ENCODE measurements at regions of chr18 and their contacts with region 1.

Region 1: DNA sequence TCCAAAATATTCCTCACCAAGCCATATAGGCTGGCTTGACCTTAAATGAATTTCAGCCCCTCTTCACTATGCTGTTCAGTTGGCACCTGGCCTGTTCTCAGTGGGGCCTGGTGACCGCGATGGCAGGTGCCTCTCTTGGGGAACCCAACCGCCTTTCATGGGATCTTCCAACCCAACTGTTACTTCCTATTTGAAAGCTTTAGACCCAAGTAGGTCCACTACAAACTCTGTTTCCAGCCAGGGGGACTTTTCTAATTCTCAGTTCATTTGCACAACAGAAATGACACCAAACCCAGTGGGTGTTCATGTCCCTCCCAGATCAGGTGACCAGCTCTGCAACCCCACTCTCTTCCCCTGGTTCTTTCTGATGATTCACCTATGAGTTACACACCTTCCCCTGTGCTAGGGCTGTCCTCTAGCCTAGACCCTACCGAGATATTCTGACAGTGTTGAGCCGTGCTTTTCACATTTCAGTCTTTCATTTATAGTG is 35.6 kb upstream of the NDUFV2 start:
- DNase-seq: peak in 1 of 3 donors; percentile 64
- H3K4me3 ChIP-seq: no peak overlapping the region
- H3K4me3 Mint-ChIP-seq: no peak overlapping the region
- H3K27ac ChIP-seq: no peak overlapping the region
- H3K27ac Mint-ChIP-seq: peak overlapping the region in 1 of 7 donors; percentile 4
- H3K4me1 ChIP-seq: peaks cover 26 to 38% of the 10 kb centered on the region in 2 donors
- H3K4me1 Mint-ChIP-seq: peaks cover 47% of the 10 kb centered on the region
- H3K27me3 ChIP-seq: no peaks in the 10 kb centered on the region
- H3K27me3 Mint-ChIP-seq: peaks cover 0 to 1% (median 0%) of the 10 kb centered on the region in 3 donors
- CTCF ChIP-seq: no peak

Region 2: DNA sequence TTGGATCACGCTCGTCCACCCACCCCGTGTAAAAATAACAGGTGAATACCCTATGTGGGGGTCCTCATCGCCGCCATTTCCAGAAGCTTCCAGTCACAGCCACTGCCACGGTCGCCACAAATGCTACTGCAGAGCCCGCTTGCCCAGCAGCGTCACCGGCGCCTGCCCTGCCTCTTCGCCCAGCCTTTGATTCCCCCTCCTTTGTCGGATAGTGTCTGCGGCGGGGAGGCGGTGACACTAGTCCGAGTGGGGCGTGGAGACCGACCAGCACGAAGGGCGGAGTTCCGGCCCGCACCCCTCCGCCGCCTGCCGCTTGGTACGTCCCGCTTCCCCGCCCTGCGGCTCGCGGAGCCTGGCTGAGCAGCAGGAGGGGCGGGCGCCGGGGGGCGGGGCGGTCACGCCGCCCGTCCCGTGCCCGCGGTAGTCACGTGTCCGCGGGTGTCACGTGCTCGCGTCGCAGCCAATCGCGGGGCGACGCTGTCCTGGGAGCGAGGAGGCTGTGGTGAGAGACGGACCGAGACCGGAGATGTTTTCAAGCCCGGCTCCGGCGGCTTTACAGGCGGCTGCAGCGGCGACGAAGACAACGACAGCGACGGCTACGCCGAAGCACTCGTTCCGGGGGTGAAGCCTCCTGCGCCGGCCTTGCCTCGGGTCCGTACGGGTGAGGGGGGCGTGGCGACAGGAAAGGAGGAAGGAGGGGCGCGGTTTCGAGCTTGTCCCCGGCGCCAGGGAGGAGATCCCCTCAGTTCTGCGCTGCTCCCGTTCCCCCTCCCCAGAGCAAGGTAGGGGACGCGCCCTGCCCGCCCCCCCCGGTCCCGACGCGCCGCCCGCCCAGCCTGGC is 69.7 kb after region 1 on chr18 and contains the start of gene ANKRD12:
- intact Hi-C with region 1: loop called in 1 of 2 experiments (anchors 5 kb)
- DNase-seq: peak; percentile 98 to 99 (median 98)
- H3K4me3 ChIP-seq: peak within 1 kb of the TSS; percentile 84 to 100 (median 88)
- H3K4me3 Mint-ChIP-seq: peak within 1 kb of the TSS; percentile 91 to 95
- H3K27ac ChIP-seq: peak within 1 kb of the TSS; percentile 97 to 100
- H3K27ac Mint-ChIP-seq: peak within 1 kb of the TSS; percentile 98 to 100 (median 99)
- H3K4me1 ChIP-seq: peaks cover 31 to 50% of the 10 kb centered on the region in 2 donors
- H3K4me1 Mint-ChIP-seq: peaks cover 47% of the 10 kb centered on the region
- H3K27me3 ChIP-seq: no peaks in the 10 kb centered on the region
- H3K27me3 Mint-ChIP-seq: no peaks in the 10 kb centered on the region
- CTCF ChIP-seq: no peak
- polyA plus RNA-seq, gene ANKRD12: 9.3 to 15.5 (median 15.4) TPM

Region 3: GRCh38 chr18:9153256-9153655 is 86.4 kb after region 1 on chr18:
- intact Hi-C with region 1: loop called in 1 of 2 experiments (anchors 5 kb)
- DNase-seq: no peak
- H3K4me3 ChIP-seq: no peak overlapping the region
- H3K4me3 Mint-ChIP-seq: peak overlapping the region in 1 of 2 donors; percentile 5
- H3K27ac ChIP-seq: peak overlapping the region in 1 of 2 donors; percentile 71
- H3K27ac Mint-ChIP-seq: peak overlapping the region; percentile 5 to 85 (median 72)
- H3K4me1 ChIP-seq: peaks cover 39 to 62% of the 10 kb centered on the region in 2 donors
- H3K4me1 Mint-ChIP-seq: peaks cover 70% of the 10 kb centered on the region
- H3K27me3 ChIP-seq: no peaks in the 10 kb centered on the region
- H3K27me3 Mint-ChIP-seq: no peaks in the 10 kb centered on the region
- CTCF ChIP-seq: no peak

Region 4: GRCh38 chr18:9184998-9185613 is 118.2 kb after region 1 on chr18:
- intact Hi-C with region 1: no loop called
- DNase-seq: no peak
- H3K4me3 ChIP-seq: peak overlapping the region; percentile 20 to 69 (median 55)
- H3K4me3 Mint-ChIP-seq: peak overlapping the region; percentile 47 to 81
- H3K27ac ChIP-seq: peak overlapping the region in 1 of 2 donors; percentile 74
- H3K27ac Mint-ChIP-seq: peak overlapping the region; percentile 29 to 81 (median 64)
- H3K4me1 ChIP-seq: peaks cover 8 to 22% of the 10 kb centered on the region in 2 donors
- H3K4me1 Mint-ChIP-seq: peaks cover 41% of the 10 kb centered on the region
- H3K27me3 ChIP-seq: no peaks in the 10 kb centered on the region
- H3K27me3 Mint-ChIP-seq: no peaks in the 10 kb centered on the region
- CTCF ChIP-seq: no peak

Region 5: DNA sequence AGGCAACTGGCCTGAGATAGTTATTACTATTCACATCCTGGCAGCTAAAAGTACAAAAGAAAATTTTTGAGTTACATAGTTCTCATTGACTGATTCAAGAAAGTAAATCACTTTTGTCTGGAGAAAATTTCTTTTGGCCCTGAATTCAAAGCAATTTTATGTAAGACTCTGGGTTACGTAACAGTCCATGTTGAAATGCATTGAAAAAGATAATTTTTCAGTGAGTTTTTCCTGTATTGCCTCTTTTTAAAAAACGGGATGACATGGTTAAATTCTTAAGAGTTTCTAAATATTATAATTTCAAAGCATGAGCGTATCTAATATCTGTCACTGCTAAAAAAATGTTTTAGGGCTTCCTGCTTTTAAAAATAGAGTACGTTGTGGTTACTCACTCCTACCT is 142.4 kb after region 1 on chr18:
- intact Hi-C with region 1: loop called in 1 of 2 experiments (anchors 10 kb)
- DNase-seq: peak; percentile 15 to 47 (median 29)
- H3K4me3 ChIP-seq: peak overlapping the region in 1 of 3 experiments; percentile 33
- H3K4me3 Mint-ChIP-seq: no peak overlapping the region
- H3K27ac ChIP-seq: peak overlapping the region in 1 of 2 donors; percentile 69
- H3K27ac Mint-ChIP-seq: peak overlapping the region; percentile 4 to 83 (median 62)
- H3K4me1 ChIP-seq: peaks cover 17 to 28% of the 10 kb centered on the region in 2 donors
- H3K4me1 Mint-ChIP-seq: peaks cover 26% of the 10 kb centered on the region
- H3K27me3 ChIP-seq: no peaks in the 10 kb centered on the region
- H3K27me3 Mint-ChIP-seq: no peaks in the 10 kb centered on the region
- CTCF ChIP-seq: no peak

Region 6: DNA sequence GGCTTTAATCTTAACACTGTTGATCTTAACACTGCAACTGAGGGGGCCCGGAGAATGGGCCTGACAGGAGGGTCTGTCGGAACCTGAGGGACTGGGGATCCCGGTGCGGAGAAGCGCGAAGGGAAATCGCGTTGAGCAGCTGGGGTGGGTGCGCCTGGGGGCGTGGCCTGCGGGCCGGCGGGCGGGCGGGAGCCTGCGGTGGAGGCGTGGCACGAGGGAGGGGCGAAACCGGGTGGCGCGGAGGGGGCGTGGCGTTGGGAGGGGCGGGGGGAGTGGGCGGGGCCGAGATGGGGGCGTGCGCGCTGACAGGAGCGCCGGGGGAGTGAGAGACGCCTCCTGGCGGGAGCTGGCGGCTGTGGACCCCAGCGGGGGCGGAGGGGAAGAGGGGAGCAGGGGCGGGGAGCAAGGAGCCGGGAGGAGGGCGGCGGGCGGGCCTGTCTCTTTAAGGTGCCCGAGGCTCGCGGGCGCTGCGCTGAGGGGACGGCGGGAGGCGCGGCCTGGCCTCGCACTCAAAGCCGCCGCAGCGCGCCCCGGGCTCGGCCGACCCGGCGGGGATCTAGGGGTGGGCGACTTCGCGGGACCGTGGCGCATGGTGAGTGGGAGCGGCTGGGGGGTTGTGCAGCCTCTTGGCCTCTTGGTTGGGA is 267.6 kb after region 1 on chr18 and contains the start of gene TWSG1:
- intact Hi-C with region 1: loop called (anchors 5 to 10 kb)
- DNase-seq: peak; percentile 78 to 84 (median 80)
- H3K4me3 ChIP-seq: peak within 1 kb of the TSS; percentile 80 to 87 (median 85)
- H3K4me3 Mint-ChIP-seq: peak within 1 kb of the TSS; percentile 92 to 93
- H3K27ac ChIP-seq: peak within 1 kb of the TSS; percentile 48 to 59
- H3K27ac Mint-ChIP-seq: peak within 1 kb of the TSS; percentile 63 to 88 (median 81)
- H3K4me1 ChIP-seq: peaks cover 14 to 31% of the 10 kb centered on the region in 2 donors
- H3K4me1 Mint-ChIP-seq: peaks cover 27% of the 10 kb centered on the region
- H3K27me3 ChIP-seq: peaks cover 0 to 14% of the 10 kb centered on the region in 2 donors
- H3K27me3 Mint-ChIP-seq: peaks cover 5 to 8% (median 8%) of the 10 kb centered on the region in 3 donors
- CTCF ChIP-seq: peak; percentile 50
- polyA plus RNA-seq, gene TWSG1: 1.6 to 5.5 (median 3.9) TPM

Region 7: GRCh38 chr18:9516437-9517064 is 449.7 kb after region 1 on chr18:
- intact Hi-C with region 1: loop called (anchors 5 to 10 kb)
- DNase-seq: peak; percentile 21 to 56 (median 51)
- H3K4me3 ChIP-seq: no peak overlapping the region
- H3K4me3 Mint-ChIP-seq: no peak overlapping the region
- H3K27ac ChIP-seq: no peak overlapping the region
- H3K27ac Mint-ChIP-seq: no peak overlapping the region
- H3K4me1 ChIP-seq: no peaks in the 10 kb centered on the region
- H3K4me1 Mint-ChIP-seq: no peaks in the 10 kb centered on the region
- H3K27me3 ChIP-seq: no peaks in the 10 kb centered on the region
- H3K27me3 Mint-ChIP-seq: no peaks in the 10 kb centered on the region
- CTCF ChIP-seq: peak; percentile 90

Measured in CD14-positive monocyte (primary cell).